ENCODE measurements at regions of chr4 and their contacts with region 1.

Region 1: GRCh38 chr4:21790438-21791029 is 158.0 kb downstream of the KCNIP4 start:
- DNase-seq: no peak
- H3K4me3 ChIP-seq: no peak overlapping the region
- H3K27ac ChIP-seq: no peak overlapping the region
- H3K4me1 ChIP-seq: no peaks in the 10 kb centered on the region
- H3K27me3 ChIP-seq: no peaks in the 10 kb centered on the region
- CTCF ChIP-seq: peak; percentile 9 to 86 (median 14)
- POLR2A ChIP-seq: no peak

Region 2: DNA sequence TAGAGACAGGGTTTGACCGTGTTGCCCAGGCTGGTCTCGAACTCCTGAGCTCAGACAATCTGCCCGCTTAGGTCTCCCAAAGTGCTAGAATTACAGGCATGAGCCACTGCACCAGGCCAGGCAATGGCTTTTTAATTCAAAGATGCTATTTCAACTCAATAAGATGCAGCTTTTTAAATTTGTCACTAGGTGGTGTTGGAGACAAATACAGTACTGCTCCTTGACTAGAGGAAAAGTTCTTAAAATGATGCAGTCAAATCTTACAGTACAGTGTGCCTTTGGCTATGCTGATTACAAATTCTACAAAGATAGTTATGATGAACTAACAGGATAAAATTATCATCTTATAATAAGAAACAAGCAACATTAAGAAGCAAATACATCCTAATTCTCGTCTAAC is 283.1 kb before region 1 on chr4:
- intact Hi-C with region 1: no loop called
- DNase-seq: no peak
- H3K4me3 ChIP-seq: no peak overlapping the region
- H3K27ac ChIP-seq: no peak overlapping the region
- H3K4me1 ChIP-seq: no peaks in the 10 kb centered on the region
- H3K27me3 ChIP-seq: no peaks in the 10 kb centered on the region
- CTCF ChIP-seq: no peak
- POLR2A ChIP-seq: no peak

Region 3: DNA sequence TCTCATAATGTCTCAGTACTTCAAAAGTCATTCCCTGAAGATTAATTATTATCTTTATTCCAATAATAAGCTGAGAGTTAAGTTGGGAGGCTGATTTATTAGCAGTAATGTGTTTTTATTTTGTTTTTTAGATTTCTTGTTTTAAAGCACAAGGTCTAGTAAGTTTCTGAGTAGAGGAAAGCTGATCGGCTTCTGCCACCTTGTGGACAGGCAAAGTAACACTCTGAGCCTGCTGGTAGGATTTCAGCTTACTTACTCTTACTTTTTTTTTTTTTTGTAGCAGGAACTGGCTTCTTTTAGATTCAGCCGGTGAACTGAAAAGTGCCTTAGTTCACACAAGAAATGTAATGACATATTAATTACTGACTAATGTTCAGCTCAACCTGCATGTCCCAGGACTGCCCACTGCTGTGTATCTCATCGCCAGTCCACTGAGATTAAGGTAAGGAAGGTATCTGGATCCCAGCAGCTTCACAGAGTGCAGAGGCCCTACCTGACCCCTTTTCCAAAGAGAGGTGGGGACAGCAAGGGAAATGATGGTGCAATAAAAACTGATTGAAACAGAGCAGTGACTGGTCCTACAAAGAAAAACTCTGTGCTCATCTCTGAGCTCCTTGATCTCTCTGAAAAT is 598.8 kb after region 1 on chr4:
- intact Hi-C with region 1: loop called (anchors 5 kb)
- DNase-seq: peak; percentile 74
- H3K4me3 ChIP-seq: no peak overlapping the region
- H3K27ac ChIP-seq: no peak overlapping the region
- H3K4me1 ChIP-seq: no peaks in the 10 kb centered on the region
- H3K27me3 ChIP-seq: no peaks in the 10 kb centered on the region
- CTCF ChIP-seq: peak; percentile 74 to 79 (median 74)
- POLR2A ChIP-seq: no peak